RWPE1 (cell line): ENCODE measurements at regions of chr2 and their contacts with region 1.

Region 1: GRCh38 chr2:162075689-162076132 is 1.7 kb upstream of the DPP4 start:
- DNase-seq: no peak
- H3K27ac ChIP-seq: no peak overlapping the region
- CTCF ChIP-seq: no peak

Region 2: DNA sequence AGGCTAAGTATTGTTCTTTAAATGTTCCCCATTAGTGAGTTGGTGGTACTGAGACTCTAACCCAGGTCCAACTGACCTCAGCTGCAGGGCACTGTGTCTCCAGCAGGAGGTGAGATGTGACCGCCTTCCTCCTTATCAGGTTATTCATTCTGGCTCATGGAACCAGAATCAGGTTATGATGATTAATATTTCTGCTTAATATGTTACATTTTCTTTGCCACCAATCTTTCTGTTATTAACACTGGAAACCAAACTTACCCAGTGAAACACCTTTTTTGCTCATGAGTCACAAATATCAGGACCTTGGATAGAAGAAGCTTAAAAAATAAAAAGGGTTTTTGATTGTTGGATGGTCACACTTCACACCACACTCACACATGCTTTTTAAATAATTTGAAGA is 87.1 kb before region 1 on chr2:
- CTCF ChIA-PET with region 1: no interaction called
- POLR2A ChIA-PET with region 1: no interaction called
- DNase-seq: peak; percentile 7
- H3K27ac ChIP-seq: no peak overlapping the region
- CTCF ChIP-seq: no peak

Region 3: GRCh38 chr2:162796750-162797149 is 721.0 kb after region 1 on chr2:
- CTCF ChIA-PET with region 1: interaction called, 13 read pairs
- POLR2A ChIA-PET with region 1: no interaction called
- DNase-seq: no peak
- H3K27ac ChIP-seq: no peak overlapping the region
- CTCF ChIP-seq: no peak